Endothelial cell of umbilical vein (primary cell): ENCODE measurements at regions of chr6 and their contacts with region 1.

Region 1: GRCh38 chr6:21593412-21593926 is at the start of gene SOX4:
- DNase-seq: peak; percentile 99
- H3K4me3 ChIP-seq: peak within 1 kb of the TSS; percentile 85 to 98 (median 96)
- H3K27ac ChIP-seq: peak within 1 kb of the TSS; percentile 94
- H3K4me1 ChIP-seq: peaks cover 14% of the 10 kb centered on the region
- H3K27me3 ChIP-seq: no peaks in the 10 kb centered on the region
- CTCF ChIP-seq: no peak
- POLR2A ChIP-seq: peak; percentile 100
- total RNA-seq, gene SOX4: 121 and 127 TPM in 2 replicates

Region 2: GRCh38 chr6:20401205-20402091 is 1192.0 kb before region 1 on chr6 and contains the start of gene E2F3:
- CTCF ChIA-PET with region 1: no interaction called
- POLR2A ChIA-PET with region 1: no interaction called
- dilution Hi-C with region 1: no loop called
- intact Hi-C with region 1: loop called (anchors 1 kb)
- DNase-seq: peak; percentile 100
- H3K4me3 ChIP-seq: peak within 1 kb of the TSS; percentile 69 to 78 (median 72)
- H3K27ac ChIP-seq: peak within 1 kb of the TSS; percentile 56
- H3K4me1 ChIP-seq: peaks cover 7% of the 10 kb centered on the region
- H3K27me3 ChIP-seq: no peaks in the 10 kb centered on the region
- CTCF ChIP-seq: no peak
- POLR2A ChIP-seq: peak; percentile 52
- total RNA-seq, gene E2F3: 21.2 and 22.0 TPM in 2 replicates

Region 3: DNA sequence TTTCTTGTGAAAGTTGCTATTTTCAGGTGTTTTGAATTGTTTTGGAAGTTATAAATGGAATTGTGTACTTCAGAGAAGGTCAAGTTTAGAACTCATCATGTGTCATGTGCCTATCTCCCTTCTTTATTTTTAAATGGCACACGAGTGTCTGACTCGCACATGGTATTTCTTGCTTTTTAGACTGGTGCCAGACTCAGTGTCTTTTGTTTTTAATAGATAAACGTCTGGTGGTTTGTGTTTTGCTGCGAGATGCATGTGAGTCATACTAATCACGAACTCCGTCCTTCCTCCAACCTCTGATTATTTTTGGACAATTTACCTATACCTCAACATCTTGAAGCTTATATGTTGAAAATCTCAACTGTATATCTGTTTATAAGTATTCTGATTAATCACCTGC is 767.1 kb before region 1 on chr6:
- CTCF ChIA-PET with region 1: interaction called, 10 read pairs
- POLR2A ChIA-PET with region 1: no interaction called
- dilution Hi-C with region 1: no loop called
- intact Hi-C with region 1: no loop called
- DNase-seq: peak; percentile 91
- H3K4me3 ChIP-seq: no peak overlapping the region
- H3K27ac ChIP-seq: peak overlapping the region; percentile 83
- H3K4me1 ChIP-seq: peaks cover 14% of the 10 kb centered on the region
- H3K27me3 ChIP-seq: no peaks in the 10 kb centered on the region
- CTCF ChIP-seq: no peak
- POLR2A ChIP-seq: no peak

Region 4: GRCh38 chr6:21501021-21501354 is 92.5 kb before region 1 on chr6:
- CTCF ChIA-PET with region 1: no interaction called
- POLR2A ChIA-PET with region 1: no interaction called
- dilution Hi-C with region 1: no loop called
- intact Hi-C with region 1: no loop called
- DNase-seq: no peak
- H3K4me3 ChIP-seq: no peak overlapping the region
- H3K27ac ChIP-seq: no peak overlapping the region
- H3K4me1 ChIP-seq: no peaks in the 10 kb centered on the region
- H3K27me3 ChIP-seq: no peaks in the 10 kb centered on the region
- CTCF ChIP-seq: no peak
- POLR2A ChIP-seq: no peak

Region 5: DNA sequence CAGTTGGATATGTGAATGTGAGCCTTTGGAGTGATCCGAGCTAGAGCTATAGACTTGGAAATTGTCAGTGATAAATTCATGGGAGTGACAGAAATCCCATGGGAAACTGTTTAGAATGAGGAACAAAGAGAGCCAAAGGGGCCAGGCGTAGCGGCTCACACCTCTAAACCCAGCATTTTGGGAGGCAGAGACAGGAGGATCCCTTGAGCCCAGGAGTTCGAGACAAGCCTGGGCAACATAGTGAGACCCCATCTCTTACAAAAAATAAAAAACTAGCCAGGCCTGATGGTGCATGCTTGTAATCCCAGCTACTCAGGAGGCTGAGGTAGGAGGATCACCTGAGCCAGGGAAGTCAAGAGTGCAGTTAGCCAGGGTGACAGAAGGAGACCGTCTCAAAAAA is 39.2 kb before region 1 on chr6:
- CTCF ChIA-PET with region 1: no interaction called
- POLR2A ChIA-PET with region 1: no interaction called
- dilution Hi-C with region 1: no loop called
- intact Hi-C with region 1: no loop called
- DNase-seq: no peak
- H3K4me3 ChIP-seq: no peak overlapping the region
- H3K27ac ChIP-seq: no peak overlapping the region
- H3K4me1 ChIP-seq: no peaks in the 10 kb centered on the region
- H3K27me3 ChIP-seq: no peaks in the 10 kb centered on the region
- CTCF ChIP-seq: no peak
- POLR2A ChIP-seq: no peak

Region 6: GRCh38 chr6:21634582-21634981 is 41.1 kb after region 1 on chr6:
- CTCF ChIA-PET with region 1: interaction called, 3 read pairs
- POLR2A ChIA-PET with region 1: no interaction called
- dilution Hi-C with region 1: no loop called
- intact Hi-C with region 1: loop called (anchors 1 kb)
- DNase-seq: peak; percentile 97
- H3K4me3 ChIP-seq: no peak overlapping the region
- H3K27ac ChIP-seq: peak overlapping the region; percentile 67
- H3K4me1 ChIP-seq: peaks cover 16% of the 10 kb centered on the region
- H3K27me3 ChIP-seq: no peaks in the 10 kb centered on the region
- CTCF ChIP-seq: no peak
- POLR2A ChIP-seq: no peak

Region 7: DNA sequence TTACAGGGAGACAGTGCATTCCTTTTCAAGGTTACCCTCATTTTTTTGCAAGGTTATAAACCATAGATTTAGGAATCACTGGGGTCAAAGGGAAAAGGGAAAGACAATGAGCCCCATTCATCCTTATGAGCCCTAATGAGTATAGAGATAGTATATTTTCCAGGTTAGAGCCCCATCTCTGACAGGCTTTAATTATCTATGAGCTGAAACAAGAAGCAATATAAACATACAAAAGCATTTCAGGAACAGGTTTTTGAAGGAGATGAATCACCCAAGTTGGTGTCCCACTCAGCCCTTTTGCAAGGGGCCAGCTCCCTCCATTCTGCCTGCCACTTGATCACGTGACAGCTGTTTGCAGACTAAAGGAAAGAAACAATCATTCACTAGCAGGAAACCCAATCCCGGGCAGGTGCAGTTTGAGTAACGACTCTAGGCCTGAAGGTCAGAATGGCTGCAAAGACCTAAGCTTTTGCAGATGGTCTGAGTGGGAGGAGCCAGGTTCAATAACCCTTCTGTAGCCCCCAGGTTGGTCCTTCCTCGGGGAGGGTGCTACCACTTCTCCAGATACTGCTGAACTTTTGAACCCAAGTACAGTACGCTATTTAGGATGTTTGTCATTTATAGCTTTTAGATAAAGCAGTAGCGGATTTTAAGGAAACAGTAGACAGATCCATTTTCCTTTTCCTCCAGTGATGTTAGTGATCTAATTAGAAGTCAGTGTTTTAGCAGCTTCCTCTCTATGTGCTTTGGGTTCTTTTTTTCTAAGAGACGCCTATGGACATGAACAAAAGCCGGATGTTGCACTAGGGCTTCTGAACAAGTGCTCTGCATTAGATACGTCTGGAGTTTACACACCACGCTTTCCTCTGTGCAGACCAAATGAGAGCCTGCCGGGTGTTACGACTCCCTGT is 253.3 kb after region 1 on chr6:
- CTCF ChIA-PET with region 1: interaction called, 3 read pairs
- POLR2A ChIA-PET with region 1: interaction called, 47 read pairs
- dilution Hi-C with region 1: no loop called
- intact Hi-C with region 1: loop called (anchors 1 kb)
- DNase-seq: peak; percentile 96
- H3K4me3 ChIP-seq: peak overlapping the region in 1 of 3 experiments; percentile 27
- H3K27ac ChIP-seq: peak overlapping the region; percentile 98
- H3K4me1 ChIP-seq: peaks cover 54% of the 10 kb centered on the region
- H3K27me3 ChIP-seq: no peaks in the 10 kb centered on the region
- CTCF ChIP-seq: no peak
- POLR2A ChIP-seq: peak; percentile 30

Region 8: DNA sequence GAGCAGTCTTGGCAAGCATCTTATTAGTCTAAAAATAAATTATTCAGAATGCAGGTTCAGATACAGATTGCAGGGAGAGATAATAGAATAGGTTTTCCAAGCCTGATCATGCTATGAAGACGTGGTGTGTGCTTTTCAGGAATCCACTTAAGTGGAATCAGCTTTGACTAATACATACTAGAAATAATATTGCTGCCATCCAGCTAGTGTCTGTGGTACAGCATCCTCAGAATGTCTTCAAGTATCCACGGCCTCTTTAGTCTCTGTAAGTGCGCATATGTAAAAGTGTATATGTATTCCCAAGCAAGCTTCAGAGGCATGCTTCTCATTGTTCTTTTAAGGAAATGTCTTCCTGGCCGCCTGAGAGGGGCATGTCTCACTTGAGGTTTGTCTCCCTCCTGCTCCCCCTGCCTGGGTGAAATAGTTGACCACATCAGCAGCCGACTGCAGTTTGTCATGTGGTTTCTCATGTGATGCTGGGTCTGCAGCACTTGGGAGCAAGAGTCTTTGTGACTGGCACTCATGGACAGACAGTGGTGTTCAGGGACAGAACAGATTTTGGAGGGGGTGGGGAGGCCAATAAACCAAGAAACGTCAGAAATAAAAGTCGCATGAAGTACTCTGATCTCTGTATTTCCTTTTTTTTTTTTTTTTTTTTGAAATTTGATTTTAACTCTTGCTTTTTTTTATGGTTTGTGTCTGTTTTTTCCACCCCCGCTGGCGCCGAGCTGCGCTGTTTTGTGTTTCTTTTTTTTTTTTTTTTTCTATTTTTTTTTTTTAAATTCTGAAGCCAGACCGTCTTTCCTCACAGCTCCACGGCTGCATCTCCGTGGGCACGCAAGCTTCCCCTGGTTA is 552.6 kb after region 1 on chr6:
- CTCF ChIA-PET with region 1: interaction called, 3 read pairs
- POLR2A ChIA-PET with region 1: interaction called, 15 read pairs
- dilution Hi-C with region 1: no loop called
- intact Hi-C with region 1: loop called (anchors 1 kb)
- DNase-seq: peak; percentile 69
- H3K4me3 ChIP-seq: no peak overlapping the region
- H3K27ac ChIP-seq: no peak overlapping the region
- H3K4me1 ChIP-seq: peaks cover 36% of the 10 kb centered on the region
- H3K27me3 ChIP-seq: no peaks in the 10 kb centered on the region
- CTCF ChIP-seq: no peak
- POLR2A ChIP-seq: no peak

Region 9: GRCh38 chr6:22828179-22829062 is 1235.0 kb after region 1 on chr6:
- CTCF ChIA-PET with region 1: interaction called, 12 read pairs
- POLR2A ChIA-PET with region 1: interaction called, 13 read pairs
- dilution Hi-C with region 1: no loop called
- intact Hi-C with region 1: loop called (anchors 1 kb)
- DNase-seq: peak; percentile 99
- H3K4me3 ChIP-seq: peak overlapping the region in 1 of 3 experiments; percentile 36
- H3K27ac ChIP-seq: peak overlapping the region; percentile 96
- H3K4me1 ChIP-seq: peaks cover 31% of the 10 kb centered on the region
- H3K27me3 ChIP-seq: no peaks in the 10 kb centered on the region
- CTCF ChIP-seq: peak; percentile 85 to 95
- POLR2A ChIP-seq: no peak